CD8-positive, alpha-beta T cell (primary cell): ENCODE measurements at regions of chr6 and their contacts with region 1.

Region 1: DNA sequence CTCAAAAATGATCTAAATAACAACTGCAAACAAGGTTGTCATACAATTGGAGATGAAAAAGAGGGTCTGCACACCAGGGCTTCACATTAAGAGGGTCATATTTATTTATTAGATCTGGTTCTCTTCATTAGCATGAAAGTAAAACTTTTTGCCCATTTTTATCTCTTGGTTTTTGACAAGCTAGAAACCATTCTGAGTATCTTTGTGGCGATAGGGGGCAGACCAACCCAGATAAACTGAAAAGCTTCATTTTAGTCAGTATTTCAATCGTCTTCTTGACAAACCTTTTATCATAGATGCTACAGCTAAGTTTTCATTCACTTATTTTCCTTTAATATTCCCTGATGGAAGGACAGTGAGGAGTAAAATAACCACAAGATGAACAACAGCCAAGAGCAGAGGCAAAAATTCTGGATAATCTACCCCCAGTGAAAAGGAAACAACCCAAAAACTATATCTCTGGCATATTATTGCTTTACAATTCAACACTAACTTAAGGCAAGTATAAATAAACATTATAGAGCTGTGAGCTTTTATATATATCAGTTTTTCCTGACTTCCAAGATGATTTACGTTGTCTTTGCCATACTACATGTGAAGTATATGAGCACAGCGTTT is 45.2 kb downstream of the THEMIS start:
- DNase-seq: peak in 8 of 9 experiments; percentile 25 to 79 (median 62)
- ATAC-seq: peak; percentile 65
- H3K4me3 ChIP-seq: no peak overlapping the region
- H3K4me3 Mint-ChIP-seq: peak overlapping the region; percentile 19
- H3K27ac ChIP-seq: peak overlapping the region in 1 of 2 experiments; percentile 36
- H3K27ac Mint-ChIP-seq: peak overlapping the region; percentile 72
- H3K4me1 ChIP-seq: peaks cover 63% of the 10 kb centered on the region
- H3K4me1 Mint-ChIP-seq: peaks cover 83% of the 10 kb centered on the region
- H3K27me3 ChIP-seq: no peaks in the 10 kb centered on the region
- H3K27me3 Mint-ChIP-seq: no peaks in the 10 kb centered on the region
- CTCF ChIP-seq: peak; percentile 69

Region 2: DNA sequence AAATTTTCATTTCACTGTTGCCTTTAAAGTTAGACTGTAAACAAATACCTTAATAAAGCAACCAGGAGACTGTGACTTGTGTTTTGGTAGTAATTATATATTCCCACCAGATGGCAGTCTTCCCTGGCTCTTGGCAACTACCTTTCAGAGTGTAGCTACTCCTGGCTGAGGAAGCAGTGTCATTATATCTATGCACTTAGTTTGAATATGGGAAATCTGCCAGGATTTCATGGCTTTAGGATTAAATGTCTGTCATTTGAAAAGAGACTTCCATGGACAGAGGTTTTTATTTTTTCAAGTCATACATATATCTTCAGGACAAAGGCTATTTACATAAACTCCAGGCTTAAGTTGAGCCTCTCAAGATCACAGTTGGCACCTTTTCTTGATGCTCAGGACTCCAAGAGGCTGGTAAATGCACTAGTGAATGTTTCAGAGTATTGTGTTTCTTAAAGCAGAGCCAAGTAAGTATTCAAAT is 118.6 kb before region 1 on chr6:
- CTCF ChIA-PET with region 1: interaction called, 14 read pairs
- POLR2A ChIA-PET with region 1: no interaction called
- intact Hi-C with region 1: loop called (anchors 2 to 5 kb)
- DNase-seq: peak in 7 of 9 experiments; percentile 4 to 84 (median 41)
- ATAC-seq: peak; percentile 96
- H3K4me3 ChIP-seq: no peak overlapping the region
- H3K4me3 Mint-ChIP-seq: no peak overlapping the region
- H3K27ac ChIP-seq: peak overlapping the region in 1 of 2 experiments; percentile 21
- H3K27ac Mint-ChIP-seq: peak overlapping the region; percentile 69
- H3K4me1 ChIP-seq: peaks cover 31% of the 10 kb centered on the region
- H3K4me1 Mint-ChIP-seq: peaks cover 67% of the 10 kb centered on the region
- H3K27me3 ChIP-seq: no peaks in the 10 kb centered on the region
- H3K27me3 Mint-ChIP-seq: no peaks in the 10 kb centered on the region
- CTCF ChIP-seq: peak; percentile 84

Region 3: DNA sequence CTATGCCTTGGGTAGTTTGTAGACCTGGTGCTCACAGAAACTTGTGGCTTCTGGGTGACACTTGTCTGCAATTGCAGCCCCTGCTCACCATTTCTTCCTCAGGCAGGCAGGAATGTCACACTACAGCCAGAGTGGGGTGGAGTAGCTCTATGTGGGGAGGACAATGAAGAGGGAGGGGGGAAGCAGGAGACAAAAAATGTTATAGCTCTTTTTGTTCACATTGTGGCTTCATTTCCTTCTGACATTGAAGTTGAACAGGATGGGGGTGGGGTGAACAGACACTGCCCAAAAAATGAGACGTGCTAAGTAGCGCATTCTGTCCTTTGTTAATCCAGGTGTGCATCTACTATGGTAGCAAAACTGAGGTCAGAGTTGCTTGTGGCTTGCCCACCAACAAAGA is 45.3 kb after region 1 on chr6 and contains the start of gene THEMIS:
- CTCF ChIA-PET with region 1: interaction called, 14 read pairs
- POLR2A ChIA-PET with region 1: interaction called, 3 read pairs
- intact Hi-C with region 1: loop called in 1 of 2 experiments (anchors 2 kb)
- DNase-seq: peak in 8 of 9 experiments; percentile 29 to 86 (median 64)
- ATAC-seq: peak; percentile 72
- H3K4me3 ChIP-seq: peak within 1 kb of the TSS; percentile 69 to 79
- H3K4me3 Mint-ChIP-seq: peak within 1 kb of the TSS; percentile 98
- H3K27ac ChIP-seq: peak within 1 kb of the TSS; percentile 55 to 77
- H3K27ac Mint-ChIP-seq: peak within 1 kb of the TSS; percentile 99
- H3K4me1 ChIP-seq: peaks cover 39% of the 10 kb centered on the region
- H3K4me1 Mint-ChIP-seq: peaks cover 61% of the 10 kb centered on the region
- H3K27me3 ChIP-seq: no peaks in the 10 kb centered on the region
- H3K27me3 Mint-ChIP-seq: no peaks in the 10 kb centered on the region
- CTCF ChIP-seq: no peak
- total RNA-seq, gene THEMIS: 26.3 to 29.3 TPM

Region 4: GRCh38 chr6:127924440-127924839 is 68.8 kb after region 1 on chr6:
- CTCF ChIA-PET with region 1: interaction called, 6 read pairs
- POLR2A ChIA-PET with region 1: interaction called, 6 read pairs
- intact Hi-C with region 1: loop called (anchors 5 kb)
- DNase-seq: peak in 1 of 9 experiments; percentile 46
- ATAC-seq: peak; percentile 51
- H3K4me3 ChIP-seq: no peak overlapping the region
- H3K4me3 Mint-ChIP-seq: no peak overlapping the region
- H3K27ac ChIP-seq: no peak overlapping the region
- H3K27ac Mint-ChIP-seq: peak overlapping the region; percentile 12
- H3K4me1 ChIP-seq: peaks cover 55% of the 10 kb centered on the region
- H3K4me1 Mint-ChIP-seq: peaks cover 56% of the 10 kb centered on the region
- H3K27me3 ChIP-seq: no peaks in the 10 kb centered on the region
- H3K27me3 Mint-ChIP-seq: no peaks in the 10 kb centered on the region
- CTCF ChIP-seq: no peak

Region 5: GRCh38 chr6:127980996-127981395 is 125.3 kb after region 1 on chr6:
- CTCF ChIA-PET with region 1: interaction called, 15 read pairs
- POLR2A ChIA-PET with region 1: interaction called, 3 read pairs
- intact Hi-C with region 1: loop called (anchors 2 to 5 kb)
- DNase-seq: no peak
- ATAC-seq: no peak
- H3K4me3 ChIP-seq: peak overlapping the region in 1 of 2 experiments; percentile 3
- H3K4me3 Mint-ChIP-seq: peak overlapping the region; percentile 76
- H3K27ac ChIP-seq: peak overlapping the region in 1 of 2 experiments; percentile 0
- H3K27ac Mint-ChIP-seq: peak overlapping the region; percentile 78
- H3K4me1 ChIP-seq: peaks cover 40% of the 10 kb centered on the region
- H3K4me1 Mint-ChIP-seq: peaks cover 61% of the 10 kb centered on the region
- H3K27me3 ChIP-seq: no peaks in the 10 kb centered on the region
- H3K27me3 Mint-ChIP-seq: no peaks in the 10 kb centered on the region
- CTCF ChIP-seq: no peak

Region 6: DNA sequence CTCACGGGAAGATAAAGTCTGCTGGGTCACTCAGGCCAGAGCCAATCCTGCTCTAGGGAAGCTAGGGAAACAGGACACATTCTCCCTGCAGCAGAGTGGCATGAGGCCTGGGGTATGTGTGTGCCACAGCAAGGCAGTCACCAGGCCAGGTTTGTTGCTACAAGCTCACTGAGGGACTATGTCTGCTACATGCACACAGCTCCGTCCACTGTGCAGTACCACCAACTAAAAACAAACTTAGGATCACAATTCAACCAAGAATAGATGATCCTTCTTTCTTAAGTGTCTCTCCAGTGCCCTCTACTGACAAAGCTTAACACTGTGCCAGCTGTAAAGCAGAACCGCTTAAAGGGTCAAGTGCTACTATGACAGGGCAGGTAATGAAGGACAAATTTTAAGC is 472.2 kb after region 1 on chr6:
- CTCF ChIA-PET with region 1: interaction called, 15 read pairs
- POLR2A ChIA-PET with region 1: no interaction called
- intact Hi-C with region 1: loop called (anchors 2 kb)
- DNase-seq: peak in 4 of 9 experiments; percentile 7 to 63 (median 35)
- ATAC-seq: peak; percentile 44
- H3K4me3 ChIP-seq: no peak overlapping the region
- H3K4me3 Mint-ChIP-seq: no peak overlapping the region
- H3K27ac ChIP-seq: no peak overlapping the region
- H3K27ac Mint-ChIP-seq: no peak overlapping the region
- H3K4me1 ChIP-seq: no peaks in the 10 kb centered on the region
- H3K4me1 Mint-ChIP-seq: no peaks in the 10 kb centered on the region
- H3K27me3 ChIP-seq: no peaks in the 10 kb centered on the region
- H3K27me3 Mint-ChIP-seq: no peaks in the 10 kb centered on the region
- CTCF ChIP-seq: no peak

Region 7: GRCh38 chr6:128731249-128732165 is 875.9 kb after region 1 on chr6:
- CTCF ChIA-PET with region 1: no interaction called
- POLR2A ChIA-PET with region 1: no interaction called
- intact Hi-C with region 1: loop called (anchors 5 kb)
- DNase-seq: peak in 2 of 9 experiments; percentile 33 to 49
- ATAC-seq: no peak
- H3K4me3 ChIP-seq: no peak overlapping the region
- H3K4me3 Mint-ChIP-seq: no peak overlapping the region
- H3K27ac ChIP-seq: no peak overlapping the region
- H3K27ac Mint-ChIP-seq: no peak overlapping the region
- H3K4me1 ChIP-seq: no peaks in the 10 kb centered on the region
- H3K4me1 Mint-ChIP-seq: no peaks in the 10 kb centered on the region
- H3K27me3 ChIP-seq: no peaks in the 10 kb centered on the region
- H3K27me3 Mint-ChIP-seq: peaks cover 11% of the 10 kb centered on the region
- CTCF ChIP-seq: peak; percentile 40

Region 8: DNA sequence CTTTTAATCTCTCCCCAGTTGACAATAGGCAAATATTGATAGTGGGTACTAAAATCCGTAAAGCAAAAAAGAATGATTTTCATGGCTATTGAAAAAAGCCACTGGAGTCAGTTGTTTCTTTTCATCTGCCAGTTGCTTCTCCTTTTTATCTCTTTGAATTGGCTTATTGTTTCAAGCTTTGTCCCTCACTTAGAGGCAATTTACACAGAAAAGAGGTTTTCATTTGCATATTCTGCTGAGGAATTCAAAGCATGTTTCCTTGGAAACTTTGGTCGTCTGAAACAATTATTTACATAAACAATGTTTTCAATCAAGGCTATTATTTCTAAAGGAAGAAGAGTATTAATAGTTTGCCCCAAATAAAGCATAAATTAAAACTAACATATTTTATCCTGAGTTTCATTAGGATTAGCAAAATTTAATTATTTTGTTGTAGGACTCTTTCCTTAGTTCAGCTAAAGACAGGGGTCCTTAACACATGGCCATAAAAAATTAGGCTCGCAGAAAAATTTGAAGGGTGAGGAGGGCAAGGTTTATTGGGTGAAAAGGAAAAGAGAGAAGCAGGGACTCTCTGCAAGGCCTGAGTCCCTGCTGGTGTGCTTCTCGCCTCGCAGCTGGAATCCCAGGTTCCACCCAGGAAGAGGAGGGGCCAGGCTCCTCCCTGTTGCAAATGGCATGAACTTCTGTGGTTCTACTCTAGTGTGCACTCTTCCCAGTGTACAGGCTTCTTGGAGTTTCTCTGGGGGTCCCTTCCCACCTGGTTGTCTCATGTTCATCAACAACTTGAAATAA is 888.5 kb after region 1 on chr6:
- CTCF ChIA-PET with region 1: no interaction called
- POLR2A ChIA-PET with region 1: no interaction called
- intact Hi-C with region 1: no loop called
- DNase-seq: no peak
- ATAC-seq: no peak
- H3K4me3 ChIP-seq: no peak overlapping the region
- H3K4me3 Mint-ChIP-seq: no peak overlapping the region
- H3K27ac ChIP-seq: no peak overlapping the region
- H3K27ac Mint-ChIP-seq: no peak overlapping the region
- H3K4me1 ChIP-seq: no peaks in the 10 kb centered on the region
- H3K4me1 Mint-ChIP-seq: no peaks in the 10 kb centered on the region
- H3K27me3 ChIP-seq: no peaks in the 10 kb centered on the region
- H3K27me3 Mint-ChIP-seq: peaks cover 9% of the 10 kb centered on the region
- CTCF ChIP-seq: no peak